ENCODE measurements at regions of chr11 and their contacts with region 1.

Region 1: GRCh38 chr11:64652586-64653387 is 61.8 kb downstream of the SLC22A12 start:
- DNase-seq: peak; percentile 84
- H3K4me3 ChIP-seq: no peak overlapping the region
- H3K27ac ChIP-seq: no peak overlapping the region
- H3K4me1 ChIP-seq: no peaks in the 10 kb centered on the region
- H3K27me3 ChIP-seq: no peaks in the 10 kb centered on the region
- CTCF ChIP-seq: peak; percentile 74

Region 2: DNA sequence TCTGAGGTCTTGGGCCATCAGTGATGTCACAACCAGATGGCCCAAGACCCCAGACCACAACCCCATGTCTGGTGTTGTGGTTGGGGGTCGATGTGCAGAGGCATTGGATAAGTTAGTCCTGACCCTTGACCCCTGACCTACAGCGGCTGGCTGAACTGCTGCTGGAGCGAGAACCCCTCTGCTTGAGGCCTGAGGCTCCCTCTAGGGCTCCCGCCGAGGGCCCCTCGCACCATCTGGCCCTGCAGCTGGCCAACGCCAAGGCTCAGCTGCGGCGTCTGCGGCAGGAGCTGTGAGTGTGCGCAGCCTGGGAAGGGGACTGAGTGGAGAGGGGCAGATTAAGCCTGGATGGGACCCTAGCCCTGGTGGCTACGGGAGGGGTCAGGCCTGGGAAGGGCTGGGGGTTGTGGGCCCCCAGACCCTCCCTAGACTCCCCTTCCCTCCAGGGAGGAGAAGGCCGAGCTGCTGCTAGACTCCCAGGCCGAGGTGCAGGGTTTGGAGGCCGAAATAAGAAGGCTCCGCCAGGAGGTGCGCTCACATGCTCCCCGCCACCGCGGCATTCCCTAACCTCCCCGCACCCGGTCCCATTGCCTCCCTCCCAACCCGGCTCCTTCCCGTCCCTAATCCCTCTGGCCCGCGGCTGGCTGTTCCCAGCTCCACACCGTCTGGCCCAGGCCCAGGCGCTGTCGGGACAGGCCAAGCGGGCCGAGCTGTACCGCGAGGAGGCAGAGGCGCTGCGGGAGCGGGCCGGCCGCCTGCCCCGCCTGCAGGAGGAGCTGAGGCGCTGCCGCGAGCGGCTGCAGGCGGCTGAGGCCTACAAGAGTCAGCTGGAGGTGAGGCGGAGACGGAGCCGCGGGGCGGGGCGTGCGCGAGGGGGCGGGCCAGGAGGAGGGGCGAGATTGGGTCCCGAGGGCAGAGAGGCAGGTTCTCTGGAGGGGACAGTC is 310.7 kb before region 1 on chr11:
- intact Hi-C with region 1: no loop called
- DNase-seq: peak; percentile 97
- H3K4me3 ChIP-seq: peak overlapping the region; percentile 36
- H3K27ac ChIP-seq: peak overlapping the region; percentile 29
- H3K4me1 ChIP-seq: peaks cover 7% of the 10 kb centered on the region
- H3K27me3 ChIP-seq: no peaks in the 10 kb centered on the region
- CTCF ChIP-seq: peak; percentile 41

Region 3: GRCh38 chr11:64448599-64449556 is 203.9 kb before region 1 on chr11:
- intact Hi-C with region 1: loop called (anchors 5 kb)
- DNase-seq: peak; percentile 84
- H3K4me3 ChIP-seq: peak overlapping the region; percentile 19
- H3K27ac ChIP-seq: peak overlapping the region; percentile 59
- H3K4me1 ChIP-seq: peaks cover 16% of the 10 kb centered on the region
- H3K27me3 ChIP-seq: no peaks in the 10 kb centered on the region
- CTCF ChIP-seq: peak; percentile 82

Region 4: GRCh38 chr11:64489831-64490441 is 162.9 kb before region 1 on chr11:
- intact Hi-C with region 1: loop called (anchors 5 kb)
- DNase-seq: peak; percentile 55
- H3K4me3 ChIP-seq: no peak overlapping the region
- H3K27ac ChIP-seq: no peak overlapping the region
- H3K4me1 ChIP-seq: no peaks in the 10 kb centered on the region
- H3K27me3 ChIP-seq: no peaks in the 10 kb centered on the region
- CTCF ChIP-seq: peak; percentile 83

Region 5: GRCh38 chr11:64553551-64554201 is 99.1 kb before region 1 on chr11:
- intact Hi-C with region 1: loop called (anchors 1 kb)
- DNase-seq: peak; percentile 66
- H3K4me3 ChIP-seq: no peak overlapping the region
- H3K27ac ChIP-seq: no peak overlapping the region
- H3K4me1 ChIP-seq: no peaks in the 10 kb centered on the region
- H3K27me3 ChIP-seq: no peaks in the 10 kb centered on the region
- CTCF ChIP-seq: peak; percentile 99

Region 6: DNA sequence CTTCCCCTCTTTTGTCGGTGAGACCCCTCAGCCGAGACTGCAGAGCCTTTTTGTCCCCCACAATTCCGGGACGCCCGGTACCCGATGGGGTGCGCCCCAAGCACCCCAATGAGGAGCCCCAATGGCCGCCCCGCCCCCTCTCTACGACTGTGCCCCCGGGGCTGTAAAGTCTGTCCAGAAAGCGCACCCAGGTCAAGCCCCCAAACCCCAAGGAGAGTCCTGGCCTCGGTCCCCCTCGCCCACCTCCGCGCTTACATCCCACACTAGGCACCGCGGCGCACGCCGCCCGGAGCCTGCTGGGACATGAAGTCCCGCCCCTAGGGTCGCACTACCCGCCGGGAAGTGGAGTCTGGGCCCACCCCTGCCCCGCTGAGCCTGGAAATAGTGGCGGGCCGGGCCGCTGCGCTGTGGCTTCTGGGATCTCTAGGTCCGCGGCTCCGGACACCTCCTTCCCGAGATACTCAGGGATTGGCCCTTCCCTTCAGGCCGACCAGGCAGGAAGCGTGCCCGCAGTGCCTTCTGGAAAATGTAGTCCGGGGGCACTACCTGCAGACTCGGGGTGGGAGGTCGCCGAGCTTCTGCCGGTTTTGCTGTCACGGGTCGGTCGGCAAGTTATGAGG is 157.6 kb after region 1 on chr11 and contains the start of gene MEN1:
- intact Hi-C with region 1: no loop called
- DNase-seq: peak; percentile 97
- H3K4me3 ChIP-seq: peak within 1 kb of the TSS; percentile 73
- H3K27ac ChIP-seq: peak within 1 kb of the TSS; percentile 61
- H3K4me1 ChIP-seq: peaks cover 2% of the 10 kb centered on the region
- H3K27me3 ChIP-seq: no peaks in the 10 kb centered on the region
- CTCF ChIP-seq: no peak
- total RNA-seq, gene MEN1: 21.1 to 45.5 TPM